Right cardiac atrium (tissue), 5 donors: ENCODE measurements at regions of chr9 and their contacts with region 1.

Region 1: GRCh38 chr9:113192455-113192854 is 28.6 kb downstream of the FKBP15 start:
- DNase-seq: no peak
- ATAC-seq: no peak
- H3K4me3 ChIP-seq: no peak overlapping the region
- H3K27ac ChIP-seq: no peak overlapping the region
- H3K4me1 ChIP-seq: no peaks in the 10 kb centered on the region
- H3K27me3 ChIP-seq: no peaks in the 10 kb centered on the region

Region 2: DNA sequence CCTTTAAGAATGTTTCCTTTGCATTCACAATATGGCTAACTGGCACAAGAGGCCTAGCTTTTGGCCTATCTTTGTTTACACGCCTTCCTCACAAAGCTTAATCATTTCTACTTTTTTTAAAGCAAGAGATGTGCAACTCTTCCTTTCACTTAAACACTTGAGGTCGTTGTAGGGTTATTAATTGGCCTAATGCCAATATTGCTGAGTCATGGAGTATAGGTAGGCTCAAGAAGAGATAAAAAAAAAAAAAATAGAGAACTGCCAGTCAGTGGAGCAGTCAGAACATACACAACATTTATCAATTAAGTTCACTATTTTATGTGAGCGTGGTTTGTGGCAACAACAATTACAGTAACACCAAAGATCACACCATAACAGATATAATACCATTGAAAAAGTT is 22.7 kb after region 1 on chr9:
- intact Hi-C with region 1: loop called in 1 of 4 experiments (anchors 2 kb)
- DNase-seq: no peak
- ATAC-seq: no peak
- H3K4me3 ChIP-seq: no peak overlapping the region
- H3K27ac ChIP-seq: no peak overlapping the region
- H3K4me1 ChIP-seq: no peaks in the 10 kb centered on the region
- H3K27me3 ChIP-seq: no peaks in the 10 kb centered on the region